B cell (primary cell): ENCODE measurements at regions of chr1 and their contacts with region 1.

Region 1: DNA sequence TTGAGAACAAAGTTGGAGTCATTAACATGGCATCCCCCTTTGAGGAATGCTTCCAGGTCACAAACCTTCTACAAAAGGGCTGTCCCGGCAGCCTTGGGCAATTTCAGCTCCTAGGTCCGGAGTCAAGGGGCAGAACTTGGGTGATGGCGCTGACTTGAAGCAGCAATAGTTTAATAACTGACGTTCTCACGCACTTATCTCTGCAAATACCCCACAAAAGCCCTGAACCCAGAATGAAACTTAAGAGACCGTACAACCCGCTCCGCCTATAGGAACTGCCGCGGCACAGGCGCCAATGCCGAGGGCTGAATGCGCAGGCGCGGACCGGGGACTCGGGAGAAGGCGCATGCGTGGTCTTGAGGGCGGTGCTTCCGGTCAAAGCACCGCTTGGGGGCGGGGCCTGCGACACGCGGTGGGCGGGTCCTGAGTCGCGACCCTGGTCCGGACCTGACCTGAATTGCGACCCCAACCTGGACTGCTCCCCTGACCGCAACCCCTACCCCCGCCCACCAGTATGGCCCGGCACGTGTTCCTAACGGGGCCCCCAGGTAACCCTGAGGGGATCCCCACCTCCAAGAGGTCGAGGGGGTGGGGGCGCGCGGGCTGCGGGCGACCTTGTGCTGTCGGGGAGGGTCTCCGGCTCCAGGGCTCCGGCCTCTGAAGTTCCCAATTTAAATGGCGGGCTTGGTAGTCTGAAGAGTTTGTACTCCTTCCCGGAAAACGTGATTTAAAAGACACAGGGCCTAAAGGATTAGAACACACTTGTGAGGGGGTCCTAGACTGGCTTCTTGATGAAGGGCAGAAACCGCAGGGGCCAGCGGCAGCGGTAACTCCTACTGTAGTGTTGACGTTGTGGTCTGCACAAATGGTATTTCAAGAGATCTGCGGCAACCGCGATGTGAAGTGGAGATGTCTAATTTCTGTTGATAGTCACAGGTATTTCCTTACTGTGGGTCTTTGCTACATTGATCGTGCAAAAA is at the start of gene NTPCR:
- DNase-seq: peak; percentile 95
- ATAC-seq: peak; percentile 89
- H3K4me3 ChIP-seq: peak within 1 kb of the TSS; percentile 66 to 92 (median 88)
- H3K4me3 Mint-ChIP-seq: peak within 1 kb of the TSS; percentile 95
- H3K27ac ChIP-seq: peak within 1 kb of the TSS; percentile 66 to 73
- H3K27ac Mint-ChIP-seq: peak within 1 kb of the TSS; percentile 92
- H3K4me1 ChIP-seq: peaks cover 13 to 23% of the 10 kb centered on the region in 2 donors
- H3K4me1 Mint-ChIP-seq: peaks cover 37% of the 10 kb centered on the region
- H3K27me3 ChIP-seq: no peaks in the 10 kb centered on the region
- H3K27me3 Mint-ChIP-seq: no peaks in the 10 kb centered on the region
- CTCF ChIP-seq: no peak
- total RNA-seq, gene NTPCR: 16.5 and 17.5 TPM in 2 replicates

Region 2: GRCh38 chr1:231337472-231338269 is 1612.8 kb before region 1 on chr1 and contains the start of gene EXOC8:
- CTCF ChIA-PET with region 1: no interaction called
- POLR2A ChIA-PET with region 1: interaction called, 10 read pairs
- intact Hi-C with region 1: no loop called
- DNase-seq: peak; percentile 99
- ATAC-seq: peak; percentile 83
- H3K4me3 ChIP-seq: peak within 1 kb of the TSS; percentile 68 to 96 (median 94)
- H3K4me3 Mint-ChIP-seq: peak within 1 kb of the TSS; percentile 99
- H3K27ac ChIP-seq: peak within 1 kb of the TSS; percentile 93 to 99
- H3K27ac Mint-ChIP-seq: peak within 1 kb of the TSS; percentile 100
- H3K4me1 ChIP-seq: peaks cover 46 to 54% of the 10 kb centered on the region in 2 donors
- H3K4me1 Mint-ChIP-seq: peaks cover 59% of the 10 kb centered on the region
- H3K27me3 ChIP-seq: no peaks in the 10 kb centered on the region
- H3K27me3 Mint-ChIP-seq: peaks cover 3% of the 10 kb centered on the region
- CTCF ChIP-seq: no peak
- total RNA-seq, gene EXOC8: 32.5 and 32.6 TPM in 2 replicates

Region 3: GRCh38 chr1:232630047-232630893 is 320.2 kb before region 1 on chr1 and contains the start of gene SIPA1L2:
- CTCF ChIA-PET with region 1: interaction called, 3 read pairs
- POLR2A ChIA-PET with region 1: no interaction called
- intact Hi-C with region 1: loop called (anchors 5 kb)
- DNase-seq: peak; percentile 88
- ATAC-seq: peak; percentile 96
- H3K4me3 ChIP-seq: peak within 1 kb of the TSS; percentile 42 to 70 (median 62)
- H3K4me3 Mint-ChIP-seq: peak within 1 kb of the TSS; percentile 91
- H3K27ac ChIP-seq: no peak within 1 kb of the TSS
- H3K27ac Mint-ChIP-seq: no peak within 1 kb of the TSS
- H3K4me1 ChIP-seq: peaks cover 14 to 16% of the 10 kb centered on the region in 2 donors
- H3K4me1 Mint-ChIP-seq: peaks cover 14% of the 10 kb centered on the region
- H3K27me3 ChIP-seq: peaks cover 0 to 18% (median 17%) of the 10 kb centered on the region in 4 experiments
- H3K27me3 Mint-ChIP-seq: peaks cover 70% of the 10 kb centered on the region
- CTCF ChIP-seq: no peak
- total RNA-seq, gene SIPA1L2: 0.07 and 0.22 TPM in 2 replicates

Region 4: GRCh38 chr1:232805269-232806185 is 145.0 kb before region 1 on chr1 and contains the start of gene MAP10:
- CTCF ChIA-PET with region 1: no interaction called
- POLR2A ChIA-PET with region 1: no interaction called
- intact Hi-C with region 1: loop called (anchors 5 kb)
- DNase-seq: peak; percentile 79
- ATAC-seq: peak; percentile 80
- H3K4me3 ChIP-seq: peak within 1 kb of the TSS; percentile 73 to 85 (median 78)
- H3K4me3 Mint-ChIP-seq: peak within 1 kb of the TSS; percentile 85
- H3K27ac ChIP-seq: peak within 1 kb of the TSS; percentile 34 to 46
- H3K27ac Mint-ChIP-seq: peak within 1 kb of the TSS; percentile 72
- H3K4me1 ChIP-seq: peaks cover 9 to 15% of the 10 kb centered on the region in 2 donors
- H3K4me1 Mint-ChIP-seq: peaks cover 19% of the 10 kb centered on the region
- H3K27me3 ChIP-seq: peaks cover 0 to 4% (median 2%) of the 10 kb centered on the region in 4 experiments
- H3K27me3 Mint-ChIP-seq: peaks cover 4% of the 10 kb centered on the region
- CTCF ChIP-seq: no peak
- total RNA-seq, gene MAP10: 1.9 and 2.0 TPM in 2 replicates

Region 5: GRCh38 chr1:233326811-233327650 is 376.5 kb after region 1 on chr1:
- CTCF ChIA-PET with region 1: no interaction called
- POLR2A ChIA-PET with region 1: no interaction called
- intact Hi-C with region 1: loop called (anchors 5 kb)
- DNase-seq: peak; percentile 97
- ATAC-seq: peak; percentile 95
- H3K4me3 ChIP-seq: peak overlapping the region in 4 of 5 experiments; percentile 32 to 62 (median 51)
- H3K4me3 Mint-ChIP-seq: peak overlapping the region; percentile 90
- H3K27ac ChIP-seq: no peak overlapping the region
- H3K27ac Mint-ChIP-seq: peak overlapping the region; percentile 79
- H3K4me1 ChIP-seq: peaks cover 11 to 12% of the 10 kb centered on the region in 2 donors
- H3K4me1 Mint-ChIP-seq: peaks cover 16% of the 10 kb centered on the region
- H3K27me3 ChIP-seq: peaks cover 0 to 7% (median 2%) of the 10 kb centered on the region in 4 experiments
- H3K27me3 Mint-ChIP-seq: peaks cover 16% of the 10 kb centered on the region
- CTCF ChIP-seq: no peak